GM23248 (cell line): ENCODE measurements at regions of chr5 and their contacts with region 1.

Region 1: DNA sequence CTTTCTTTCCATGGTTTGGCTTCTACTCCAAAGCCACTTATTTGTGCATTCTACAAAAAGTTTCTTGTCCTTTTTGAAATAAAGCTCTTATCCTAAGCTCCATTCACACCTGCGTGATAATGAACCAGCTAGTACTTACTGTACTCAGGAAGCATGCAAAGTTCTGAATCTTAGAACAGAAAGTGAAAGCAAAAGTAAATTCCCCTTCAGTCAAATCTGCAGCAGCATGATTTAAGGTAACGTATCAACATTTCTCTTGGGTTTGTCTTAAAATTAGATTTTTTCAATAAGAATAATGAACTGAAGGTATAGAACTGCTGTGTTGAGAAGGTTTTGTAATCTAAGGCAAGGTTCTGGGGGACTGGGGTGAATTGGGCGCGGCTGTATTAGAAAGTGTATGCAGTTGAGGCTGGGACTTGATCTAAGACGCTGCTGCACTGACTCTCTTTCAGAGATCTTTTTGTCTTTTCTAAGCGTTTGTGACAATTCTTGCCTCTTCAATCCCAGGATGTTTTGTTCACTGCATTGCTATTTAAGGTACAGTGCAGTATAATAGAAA is at the start of gene ERAP2:
- DNase-seq: peak; percentile 72
- H3K4me3 ChIP-seq: peak within 1 kb of the TSS; percentile 89
- H3K27ac ChIP-seq: peak within 1 kb of the TSS; percentile 54
- H3K4me1 ChIP-seq: peaks cover 23% of the 10 kb centered on the region
- H3K27me3 ChIP-seq: no peaks in the 10 kb centered on the region
- total RNA-seq, gene ERAP2: 0.38 and 1.8 TPM in 2 replicates

Region 2: DNA sequence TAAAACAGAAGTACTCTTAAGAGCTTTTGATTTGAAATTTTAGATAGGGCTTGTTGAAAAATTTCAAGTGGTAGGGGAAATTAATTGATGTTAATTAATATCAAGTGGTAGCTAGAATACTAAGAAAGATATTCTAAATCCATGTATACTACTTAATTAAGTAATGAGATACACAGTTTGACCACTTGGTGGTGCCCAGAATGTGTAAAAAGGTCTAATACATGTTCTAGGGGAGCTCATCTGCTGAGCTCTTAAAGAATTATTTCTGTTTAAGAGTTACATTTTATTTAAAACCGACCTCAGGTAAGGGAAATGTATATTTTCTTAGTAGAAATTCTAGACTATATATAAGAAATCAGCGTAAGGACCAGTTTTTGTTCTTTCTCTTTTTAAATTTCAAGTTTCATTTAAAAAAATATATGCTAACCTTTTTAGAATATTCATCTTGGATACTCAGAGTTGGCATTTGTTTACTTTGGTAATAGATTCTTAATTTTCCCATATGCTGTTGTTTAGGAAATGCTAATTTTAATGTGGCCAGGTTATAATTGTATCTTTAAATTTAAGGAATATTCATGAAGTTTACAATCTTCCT is 121.0 kb after region 1 on chr5:
- in situ Hi-C with region 1: no loop called
- DNase-seq: peak; percentile 68
- H3K4me3 ChIP-seq: no peak overlapping the region
- H3K27ac ChIP-seq: no peak overlapping the region
- H3K4me1 ChIP-seq: no peaks in the 10 kb centered on the region
- H3K27me3 ChIP-seq: no peaks in the 10 kb centered on the region

Region 3: DNA sequence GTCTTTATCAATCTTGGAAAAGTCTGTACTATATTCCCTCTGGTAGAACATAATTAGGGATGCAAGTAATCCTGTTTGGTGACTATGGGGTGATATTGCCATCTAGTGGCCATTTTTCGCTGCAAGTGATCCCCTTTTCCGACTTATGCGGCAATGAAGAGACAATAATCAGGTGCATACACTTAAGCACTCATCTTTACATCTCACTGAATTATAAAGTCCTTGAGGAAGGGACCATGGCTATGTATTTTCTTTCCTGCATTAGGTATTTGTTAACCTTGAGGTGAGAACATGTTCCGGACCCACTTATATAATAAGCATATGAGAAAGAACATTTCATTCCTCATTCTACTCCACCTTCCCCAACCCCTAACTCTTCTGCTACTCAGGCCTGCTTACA is 285.7 kb after region 1 on chr5:
- in situ Hi-C with region 1: loop called (anchors 10 kb)
- DNase-seq: peak; percentile 72
- H3K4me3 ChIP-seq: no peak overlapping the region
- H3K27ac ChIP-seq: no peak overlapping the region
- H3K4me1 ChIP-seq: peaks cover 19% of the 10 kb centered on the region
- H3K27me3 ChIP-seq: no peaks in the 10 kb centered on the region